ENCODE measurements at regions of chr11 and their contacts with region 1.

Region 1: DNA sequence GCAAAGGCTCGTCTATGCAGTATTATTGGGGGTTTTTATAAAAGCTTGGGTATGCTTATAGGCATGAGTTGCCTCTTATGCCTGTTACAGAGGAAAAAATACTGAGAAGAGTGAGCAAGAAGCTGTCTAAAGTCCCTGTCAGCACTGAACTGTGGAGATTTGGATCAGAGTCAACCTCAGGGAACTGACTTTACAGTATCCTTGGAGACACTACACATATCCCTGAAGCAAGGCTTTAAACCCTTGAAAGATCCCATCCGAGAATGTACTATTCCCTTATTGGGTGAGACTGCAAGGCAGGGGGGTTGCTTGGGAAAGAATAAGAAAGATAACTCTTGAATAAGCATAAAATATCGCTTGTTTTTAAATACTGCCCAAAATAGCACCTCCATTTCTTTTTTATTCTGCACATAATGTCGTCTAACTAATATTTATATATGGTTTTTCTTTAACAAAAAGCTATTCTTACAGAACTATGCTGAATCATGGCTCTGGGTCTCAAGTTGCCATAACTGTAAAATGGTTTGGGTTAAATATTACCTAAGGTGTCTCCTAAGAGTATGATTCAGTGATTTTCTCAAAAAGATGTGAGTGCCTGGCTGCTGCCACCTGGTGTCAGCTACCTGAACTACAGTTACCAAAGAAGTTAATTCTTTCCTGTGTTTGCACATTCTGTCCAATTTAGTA is 1062.8 kb downstream of the DLG2 start:
- DNase-seq: peak; percentile 73
- H3K4me3 Mint-ChIP-seq: no peak overlapping the region
- H3K27ac Mint-ChIP-seq: no peak overlapping the region
- H3K4me1 Mint-ChIP-seq: no peaks in the 10 kb centered on the region
- H3K27me3 Mint-ChIP-seq: no peaks in the 10 kb centered on the region

Region 2: DNA sequence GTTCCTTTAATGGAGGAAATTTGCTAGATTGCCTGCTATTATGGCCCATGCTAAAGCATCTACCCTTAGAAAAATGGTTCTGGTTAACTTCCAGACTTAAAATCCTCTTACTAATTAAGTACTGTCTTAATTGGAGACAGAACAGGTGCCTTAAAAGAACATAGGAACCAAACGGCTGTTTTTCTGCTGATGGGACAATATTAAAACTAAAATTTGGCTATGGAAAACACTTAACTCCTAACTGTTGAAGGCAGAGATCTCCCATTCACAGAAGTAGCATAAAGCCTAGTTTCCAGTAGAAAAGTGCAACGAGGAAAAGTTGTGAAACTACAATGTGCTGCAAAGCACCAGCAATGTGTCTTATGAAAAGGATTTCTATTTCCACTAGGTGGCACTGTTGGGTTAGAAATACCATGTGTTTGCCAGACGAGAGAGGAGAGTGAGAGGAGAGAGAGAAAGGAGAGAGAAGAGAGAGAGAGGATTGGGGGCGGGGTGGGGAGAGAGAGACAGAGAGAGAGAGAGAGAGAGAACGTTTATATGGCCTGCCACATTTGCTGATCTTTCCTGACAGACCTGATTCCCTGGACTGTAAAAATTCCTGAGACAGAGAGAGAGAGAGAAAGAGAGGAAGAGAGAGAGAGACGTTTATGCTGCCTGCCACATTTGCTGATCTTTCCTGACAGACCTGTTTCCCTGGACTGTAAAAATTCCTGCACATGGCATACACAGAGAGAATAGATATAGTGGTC is 1882.1 kb before region 1 on chr11:
- intact Hi-C with region 1: loop called (anchors 10 kb)
- DNase-seq: peak; percentile 75
- H3K4me3 Mint-ChIP-seq: no peak overlapping the region
- H3K27ac Mint-ChIP-seq: no peak overlapping the region
- H3K4me1 Mint-ChIP-seq: peaks cover 3% of the 10 kb centered on the region
- H3K27me3 Mint-ChIP-seq: peaks cover 5% of the 10 kb centered on the region

Region 3: GRCh38 chr11:83836883-83837654 is 727.3 kb before region 1 on chr11:
- intact Hi-C with region 1: loop called (anchors 10 kb)
- DNase-seq: peak; percentile 59
- H3K4me3 Mint-ChIP-seq: no peak overlapping the region
- H3K27ac Mint-ChIP-seq: no peak overlapping the region
- H3K4me1 Mint-ChIP-seq: peaks cover 3% of the 10 kb centered on the region
- H3K27me3 Mint-ChIP-seq: peaks cover 8% of the 10 kb centered on the region

Region 4: DNA sequence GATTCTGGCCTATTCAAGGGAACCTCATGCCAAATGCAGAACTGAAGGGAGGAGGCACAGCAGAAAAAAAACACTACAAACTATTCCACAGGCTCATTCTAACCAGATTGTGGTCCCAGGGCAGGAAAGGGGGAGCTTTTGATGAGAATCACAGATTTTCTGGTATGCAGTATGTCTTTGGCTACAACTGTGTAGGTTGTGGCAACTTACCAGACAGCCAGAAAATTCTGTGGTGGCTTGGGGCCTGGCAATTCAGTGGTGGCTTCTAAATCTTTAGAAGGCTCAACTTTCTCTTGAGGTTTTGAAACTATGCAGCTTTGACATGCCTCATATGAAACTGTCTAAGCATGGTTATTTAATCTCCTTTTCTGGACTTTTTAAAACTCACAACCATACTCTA is 427.4 kb before region 1 on chr11:
- intact Hi-C with region 1: no loop called
- DNase-seq: no peak
- H3K4me3 Mint-ChIP-seq: no peak overlapping the region
- H3K27ac Mint-ChIP-seq: no peak overlapping the region
- H3K4me1 Mint-ChIP-seq: no peaks in the 10 kb centered on the region
- H3K27me3 Mint-ChIP-seq: no peaks in the 10 kb centered on the region

Region 5: GRCh38 chr11:84384731-84385130 is 179.6 kb before region 1 on chr11:
- intact Hi-C with region 1: loop called (anchors 1 kb)
- DNase-seq: peak; percentile 71
- H3K4me3 Mint-ChIP-seq: no peak overlapping the region
- H3K27ac Mint-ChIP-seq: no peak overlapping the region
- H3K4me1 Mint-ChIP-seq: no peaks in the 10 kb centered on the region
- H3K27me3 Mint-ChIP-seq: no peaks in the 10 kb centered on the region

Region 6: GRCh38 chr11:84673753-84674152 is 109.4 kb after region 1 on chr11:
- intact Hi-C with region 1: no loop called
- DNase-seq: no peak
- H3K4me3 Mint-ChIP-seq: no peak overlapping the region
- H3K27ac Mint-ChIP-seq: no peak overlapping the region
- H3K4me1 Mint-ChIP-seq: no peaks in the 10 kb centered on the region
- H3K27me3 Mint-ChIP-seq: no peaks in the 10 kb centered on the region

Measured in activated CD4-positive, alpha-beta T cell treated with anti-CD3 and anti-CD28 coated beads, Interleukin-2, amount 10 ng/mL, durations not matched to agents 24 days and 14 days (primary cell).